Gastrocnemius medialis (tissue), 4 donors: ENCODE measurements at regions of chr9 and their contacts with region 1.

Region 1: DNA sequence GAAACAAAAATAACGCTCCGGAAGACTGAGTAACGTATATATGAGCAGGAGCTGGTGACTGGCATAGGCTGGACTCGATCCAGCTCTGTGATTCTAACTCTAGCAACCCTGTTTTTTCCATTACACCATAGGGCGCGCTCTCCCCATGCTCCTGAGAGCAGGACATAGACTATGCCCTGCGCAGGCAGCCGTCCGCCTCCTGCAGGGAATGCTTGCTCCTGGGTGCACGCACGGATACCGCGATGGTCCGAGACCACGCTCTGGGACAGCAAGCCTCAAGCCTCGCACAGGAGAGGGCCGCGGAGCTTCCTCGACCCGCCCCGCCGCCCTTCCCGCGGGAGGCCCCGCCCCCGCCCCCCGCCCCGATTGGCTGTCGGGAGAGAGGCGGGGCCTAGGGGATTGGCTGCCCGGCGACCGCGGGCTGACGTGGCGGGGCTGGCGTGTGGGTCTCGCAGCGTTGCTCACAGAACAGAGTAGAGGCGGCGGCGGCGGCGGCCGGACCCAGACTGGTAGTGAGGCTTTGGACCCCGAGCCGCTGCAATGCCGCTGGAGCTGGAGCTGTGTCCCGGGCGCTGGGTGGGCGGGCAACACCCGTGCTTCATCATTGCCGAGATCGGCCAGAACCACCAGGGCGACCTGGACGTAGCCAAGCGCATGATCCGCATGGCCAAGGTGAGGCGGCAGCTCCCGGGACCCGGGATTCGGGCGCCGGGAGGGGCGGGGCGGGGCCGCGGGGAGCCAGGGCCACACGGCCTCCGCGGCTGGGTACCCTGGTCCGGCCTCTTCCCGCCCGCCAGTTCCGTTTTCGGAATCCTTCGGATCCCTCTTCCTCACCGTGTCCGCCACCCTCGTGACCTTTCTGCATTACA is at the start of gene NANS:
- DNase-seq: peak; percentile 91
- ATAC-seq: peak; percentile 95 to 98
- H3K4me3 ChIP-seq: peak within 1 kb of the TSS; percentile 72 to 83 (median 74)
- H3K27ac ChIP-seq: peak within 1 kb of the TSS; percentile 91 to 93 (median 92)
- H3K4me1 ChIP-seq: peaks cover 8 to 15% of the 10 kb centered on the region in 2 donors
- H3K27me3 ChIP-seq: no peaks in the 10 kb centered on the region
- CTCF ChIP-seq: peak in 1 of 5 experiments; percentile 13
- POLR2A ChIP-seq: peak; percentile 92 to 98
- total RNA-seq, gene NANS: 29.0 to 64.7 (median 34.2) TPM

Region 2: GRCh38 chr9:97910357-97910756 is 146.1 kb before region 1 on chr9:
- in situ Hi-C with region 1: loop called in 2 of 4 experiments (anchors 10 kb)
- intact Hi-C with region 1: no loop called
- DNase-seq: no peak
- ATAC-seq: no peak
- H3K4me3 ChIP-seq: no peak overlapping the region
- H3K27ac ChIP-seq: no peak overlapping the region
- H3K4me1 ChIP-seq: peaks cover 0 to under 1% of the 10 kb centered on the region in 2 donors
- H3K27me3 ChIP-seq: no peaks in the 10 kb centered on the region
- CTCF ChIP-seq: no peak
- POLR2A ChIP-seq: no peak

Region 3: DNA sequence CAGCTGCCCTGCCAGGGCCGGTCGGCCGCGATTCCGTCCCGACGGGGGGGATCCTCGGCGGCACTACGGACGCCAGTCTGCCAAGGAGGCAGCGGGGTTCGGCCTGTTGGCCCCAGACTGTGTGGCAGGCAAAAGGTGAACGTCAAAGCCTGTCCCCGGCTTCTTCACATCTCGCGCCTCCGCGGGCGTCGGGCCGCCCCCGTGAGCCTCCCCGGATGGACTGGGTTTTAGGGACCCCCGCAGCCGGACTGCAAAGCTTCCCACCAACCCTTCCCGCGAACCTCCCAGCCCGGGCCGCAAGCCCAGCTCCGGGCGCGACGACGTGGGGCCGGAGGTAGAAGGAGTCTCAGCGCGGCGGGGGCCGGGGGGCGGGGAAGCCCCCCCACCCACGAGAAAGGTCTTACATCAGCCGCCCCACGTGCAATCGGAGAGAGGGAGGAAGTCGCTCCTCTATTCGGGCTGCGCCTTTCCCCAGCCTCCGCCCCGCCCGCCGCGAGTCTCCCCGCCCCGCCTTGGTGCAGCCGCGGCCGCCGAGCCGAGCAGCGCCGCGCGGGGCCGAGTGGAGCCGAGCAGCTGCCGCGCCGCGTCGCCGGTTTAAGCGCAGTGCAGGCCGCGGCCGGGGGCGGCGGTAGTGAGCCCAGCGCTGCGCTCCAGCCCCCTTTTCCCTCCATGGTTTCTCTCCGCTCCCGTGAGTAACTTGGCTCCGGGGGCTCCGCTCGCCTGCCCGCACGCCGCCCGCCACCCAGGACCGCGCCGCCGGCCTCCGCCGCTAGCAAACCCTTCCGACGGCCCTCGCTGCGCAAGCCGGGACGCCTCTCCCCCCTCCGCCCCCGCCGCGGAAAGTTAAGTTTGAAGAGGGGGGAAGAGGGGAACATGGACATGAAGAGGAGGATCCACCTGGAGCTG is 73.6 kb before region 1 on chr9 and contains the start of gene ANP32B:
- in situ Hi-C with region 1: no loop called
- intact Hi-C with region 1: loop called (anchors 1 kb)
- DNase-seq: peak; percentile 73 to 85
- ATAC-seq: peak; percentile 55 to 59
- H3K4me3 ChIP-seq: peak within 1 kb of the TSS; percentile 84 to 99 (median 89)
- H3K27ac ChIP-seq: peak within 1 kb of the TSS; percentile 93 to 99 (median 96)
- H3K4me1 ChIP-seq: peaks cover 48 to 55% of the 10 kb centered on the region in 2 donors
- H3K27me3 ChIP-seq: no peaks in the 10 kb centered on the region
- CTCF ChIP-seq: peak; percentile 73 to 99 (median 97)
- POLR2A ChIP-seq: peak; percentile 58 to 63
- total RNA-seq, gene ANP32B: 8.2 to 24.5 (median 17.8) TPM

Region 4: GRCh38 chr9:98034593-98035546 is 21.6 kb before region 1 on chr9:
- in situ Hi-C with region 1: no loop called
- intact Hi-C with region 1: loop called (anchors 1 kb)
- DNase-seq: peak; percentile 69 to 82
- ATAC-seq: peak; percentile 45 to 61
- H3K4me3 ChIP-seq: peak overlapping the region in 1 of 4 donors; percentile 26
- H3K27ac ChIP-seq: peak overlapping the region; percentile 75 to 80 (median 80)
- H3K4me1 ChIP-seq: peaks cover 36 to 39% of the 10 kb centered on the region in 2 donors
- H3K27me3 ChIP-seq: no peaks in the 10 kb centered on the region
- CTCF ChIP-seq: peak; percentile 78 to 83 (median 81)
- POLR2A ChIP-seq: no peak

Region 5: DNA sequence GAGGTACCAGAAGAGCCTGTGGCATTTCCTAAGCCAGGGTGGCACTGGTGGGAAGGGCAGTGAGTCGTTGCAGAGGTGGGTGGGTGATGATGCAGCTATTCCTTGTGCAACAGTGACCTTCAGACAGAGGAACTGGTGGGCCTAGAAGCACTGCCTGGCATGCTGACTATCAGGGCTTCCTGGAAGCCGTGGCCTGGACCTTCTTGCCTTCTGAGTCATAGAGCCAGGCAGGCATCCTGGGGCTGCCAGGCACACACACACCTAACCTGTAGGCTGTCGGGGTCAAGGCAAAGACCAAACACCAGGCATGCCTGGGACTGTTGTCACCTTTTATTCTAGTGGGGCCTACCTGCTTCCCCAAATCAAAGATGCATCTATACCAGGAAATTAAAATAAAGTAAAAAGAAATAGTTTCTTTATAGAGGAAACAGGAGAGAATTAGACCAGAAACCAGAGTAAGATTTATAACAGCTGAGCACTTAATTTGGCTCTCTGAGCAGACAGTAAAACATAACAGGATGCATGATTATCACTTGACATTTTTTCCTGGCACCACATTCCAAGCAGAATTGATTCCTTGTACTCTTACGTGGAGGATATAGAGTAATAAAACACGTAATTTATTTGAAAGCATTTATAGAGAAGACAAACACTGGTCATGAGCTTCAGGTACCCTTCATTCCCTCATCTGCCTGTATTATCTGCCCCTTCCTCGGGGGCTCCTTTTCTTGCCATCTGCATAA is 25.1 kb after region 1 on chr9:
- in situ Hi-C with region 1: no loop called
- intact Hi-C with region 1: no loop called
- DNase-seq: no peak
- ATAC-seq: no peak
- H3K4me3 ChIP-seq: no peak overlapping the region
- H3K27ac ChIP-seq: no peak overlapping the region
- H3K4me1 ChIP-seq: no peaks in the 10 kb centered on the region
- H3K27me3 ChIP-seq: no peaks in the 10 kb centered on the region
- CTCF ChIP-seq: no peak
- POLR2A ChIP-seq: no peak

Region 6: DNA sequence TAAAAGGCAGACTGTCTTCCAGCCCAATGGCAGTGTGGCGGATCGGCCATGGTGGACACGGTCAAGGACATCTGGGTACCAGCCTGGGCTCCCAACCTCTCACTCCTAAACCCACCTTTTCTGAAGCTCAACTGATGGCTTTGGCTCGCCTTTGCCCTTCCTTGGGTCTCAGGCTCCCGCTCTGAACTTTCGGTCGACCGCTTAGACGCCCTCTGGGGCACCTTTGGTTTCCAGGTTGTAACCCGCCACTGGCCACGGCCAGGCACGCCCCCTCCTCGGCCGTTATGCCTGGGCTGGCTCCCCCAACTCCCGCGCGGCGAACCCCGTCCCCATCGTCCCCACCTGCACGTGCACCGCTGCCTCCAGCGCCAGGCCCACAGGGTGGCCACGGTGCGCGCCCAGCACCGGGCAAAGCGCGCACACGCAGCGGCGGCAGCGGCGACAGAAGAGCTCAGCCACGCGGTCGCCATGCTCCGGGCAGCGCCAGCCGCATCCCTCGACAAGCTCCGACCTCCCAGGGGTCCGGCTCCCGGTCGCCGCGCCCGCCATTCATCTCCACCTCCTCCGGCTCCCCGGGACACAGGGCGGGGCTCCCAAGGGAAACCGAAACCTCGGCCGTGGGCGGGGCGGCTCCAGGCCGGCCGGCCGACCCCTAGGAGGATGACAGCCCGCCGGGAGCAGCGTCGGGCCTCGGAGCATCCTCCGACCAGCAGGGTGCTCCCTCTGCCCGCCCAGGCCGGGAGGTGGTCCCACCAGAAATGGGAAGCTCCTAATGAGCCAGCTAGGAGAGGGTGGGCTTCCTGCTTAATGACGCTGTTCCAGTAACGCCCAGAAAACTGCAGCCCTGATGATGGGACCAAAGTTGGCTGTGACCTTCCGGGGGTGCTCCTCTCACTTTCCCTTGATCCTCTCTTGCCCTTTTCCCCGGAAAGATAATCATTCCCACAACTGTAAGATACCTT is 62.4 kb after region 1 on chr9 and contains the start of gene TRIM14:
- in situ Hi-C with region 1: no loop called
- intact Hi-C with region 1: no loop called
- DNase-seq: no peak
- ATAC-seq: peak in 1 of 2 donors; percentile 33
- H3K4me3 ChIP-seq: peak within 1 kb of the TSS; percentile 60 to 89 (median 64)
- H3K27ac ChIP-seq: peak within 1 kb of the TSS in 3 of 4 donors; percentile 15 to 18 (median 16)
- H3K4me1 ChIP-seq: peaks cover 0 to 5% of the 10 kb centered on the region in 2 donors
- H3K27me3 ChIP-seq: peaks cover 0 to 3% (median 0%) of the 10 kb centered on the region in 3 donors
- CTCF ChIP-seq: no peak
- POLR2A ChIP-seq: no peak
- total RNA-seq, gene TRIM14: 1.1 to 3.2 (median 1.3) TPM

Region 7: DNA sequence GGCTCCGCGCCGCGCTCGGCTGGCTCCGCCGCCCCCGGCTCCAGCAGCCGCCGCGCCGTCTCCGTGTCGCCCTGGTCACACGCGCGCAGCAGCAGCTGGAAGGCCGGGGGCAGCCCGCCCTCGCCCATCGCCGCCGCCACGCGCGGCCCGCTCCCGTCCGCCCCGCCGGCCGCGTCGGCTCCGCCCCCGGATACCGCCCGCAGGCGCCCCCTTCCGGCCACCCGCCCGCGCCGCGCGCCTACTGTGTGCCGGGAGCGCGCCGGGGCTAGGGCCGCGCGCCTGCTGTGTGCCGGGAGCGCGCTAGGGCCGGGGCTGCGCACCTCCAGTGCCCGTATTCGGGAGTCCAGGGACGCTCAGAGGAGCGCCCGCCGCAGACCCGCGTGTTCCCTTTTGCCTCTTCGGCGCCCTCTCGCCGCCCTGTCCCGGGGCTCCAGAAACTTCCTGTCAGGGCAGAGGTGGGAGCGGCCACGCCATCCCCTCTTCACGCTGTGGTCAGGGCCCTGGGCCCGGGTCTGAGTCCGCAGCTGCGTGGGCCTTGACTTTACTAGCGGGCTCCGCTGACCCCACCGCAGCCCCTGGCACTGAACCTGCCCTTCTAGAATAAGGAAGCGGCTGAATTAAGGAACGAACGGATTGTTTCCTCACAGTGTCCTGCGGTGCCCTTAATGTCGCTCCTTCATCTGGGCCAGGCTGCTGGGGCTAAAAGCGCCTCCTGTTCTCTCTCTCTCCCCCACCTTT is 740.0 kb after region 1 on chr9 and contains the start of gene ANKS6:
- in situ Hi-C with region 1: loop called in 1 of 4 experiments (anchors 25 kb)
- intact Hi-C with region 1: no loop called
- DNase-seq: peak; percentile 49 to 65
- ATAC-seq: peak; percentile 93 to 95
- H3K4me3 ChIP-seq: peak within 1 kb of the TSS; percentile 60 to 92 (median 66)
- H3K27ac ChIP-seq: peak within 1 kb of the TSS; percentile 63 to 79 (median 71)
- H3K4me1 ChIP-seq: peaks cover 8 to 11% of the 10 kb centered on the region in 2 donors
- H3K27me3 ChIP-seq: no peaks in the 10 kb centered on the region
- CTCF ChIP-seq: peak in 4 of 5 experiments; percentile 61 to 74 (median 67)
- POLR2A ChIP-seq: peak in 1 of 2 donors; percentile 48
- total RNA-seq, gene ANKS6: 3.9 to 7.0 (median 4.4) TPM